Activated CD4-positive, alpha-beta memory T cell treated with anti-CD3 and anti-CD28 coated beads, Interleukin-2, amount 10 ng/mL, durations not matched to agents 7 days and 5 days (primary cell): ENCODE measurements at regions of chr5 and their contacts with region 1.

Region 1: DNA sequence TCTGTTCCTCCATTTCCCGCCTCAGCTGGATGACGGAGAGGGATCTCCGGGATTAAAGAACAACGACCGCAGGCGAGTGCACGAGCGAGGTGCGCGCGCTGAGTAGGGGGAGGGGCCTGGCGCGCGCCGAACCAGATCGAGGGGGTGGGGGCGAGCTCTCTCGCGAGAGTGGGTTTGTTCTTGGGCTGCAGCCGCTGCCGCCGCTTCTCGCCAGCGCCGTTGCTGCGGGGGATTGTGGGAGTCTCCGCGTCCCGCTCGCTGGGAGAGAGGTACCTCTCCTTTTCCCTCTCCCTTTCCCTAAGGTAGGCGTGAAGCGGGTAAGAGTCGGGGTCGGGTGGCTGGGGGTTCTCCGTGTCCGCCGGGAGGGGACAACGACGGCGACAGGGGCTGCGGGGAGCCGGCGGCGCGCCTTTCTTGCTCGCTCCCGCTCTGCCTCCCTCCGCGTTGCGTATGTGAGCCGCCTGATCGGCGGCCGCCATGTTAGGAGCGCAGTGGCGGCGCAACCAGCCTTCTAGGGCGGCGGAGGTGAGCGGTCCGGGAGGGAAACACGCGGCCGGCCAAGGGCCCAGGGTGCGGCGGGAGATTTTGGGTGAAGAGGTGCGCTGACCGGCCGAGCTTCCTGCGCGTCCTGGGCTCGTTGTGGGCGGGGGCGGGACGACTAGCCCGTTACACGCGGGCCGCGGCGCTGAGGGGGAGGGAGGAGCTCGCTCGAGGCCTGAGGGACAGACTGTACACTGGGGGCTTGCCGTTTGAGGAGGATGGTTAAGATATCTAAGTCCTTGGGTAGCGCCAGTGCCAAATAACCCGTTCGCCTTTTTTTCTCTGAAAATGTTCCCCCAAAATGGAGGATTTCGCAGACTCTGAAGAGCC is at the start of gene MATR3:
- DNase-seq: peak; percentile 95
- H3K4me3 Mint-ChIP-seq: peak within 1 kb of the TSS; percentile 95
- H3K27ac Mint-ChIP-seq: peak within 1 kb of the TSS; percentile 98
- H3K4me1 Mint-ChIP-seq: peaks cover 44% of the 10 kb centered on the region
- H3K27me3 Mint-ChIP-seq: no peaks in the 10 kb centered on the region
- total RNA-seq, gene MATR3: 168 to 193 TPM

Region 2: DNA sequence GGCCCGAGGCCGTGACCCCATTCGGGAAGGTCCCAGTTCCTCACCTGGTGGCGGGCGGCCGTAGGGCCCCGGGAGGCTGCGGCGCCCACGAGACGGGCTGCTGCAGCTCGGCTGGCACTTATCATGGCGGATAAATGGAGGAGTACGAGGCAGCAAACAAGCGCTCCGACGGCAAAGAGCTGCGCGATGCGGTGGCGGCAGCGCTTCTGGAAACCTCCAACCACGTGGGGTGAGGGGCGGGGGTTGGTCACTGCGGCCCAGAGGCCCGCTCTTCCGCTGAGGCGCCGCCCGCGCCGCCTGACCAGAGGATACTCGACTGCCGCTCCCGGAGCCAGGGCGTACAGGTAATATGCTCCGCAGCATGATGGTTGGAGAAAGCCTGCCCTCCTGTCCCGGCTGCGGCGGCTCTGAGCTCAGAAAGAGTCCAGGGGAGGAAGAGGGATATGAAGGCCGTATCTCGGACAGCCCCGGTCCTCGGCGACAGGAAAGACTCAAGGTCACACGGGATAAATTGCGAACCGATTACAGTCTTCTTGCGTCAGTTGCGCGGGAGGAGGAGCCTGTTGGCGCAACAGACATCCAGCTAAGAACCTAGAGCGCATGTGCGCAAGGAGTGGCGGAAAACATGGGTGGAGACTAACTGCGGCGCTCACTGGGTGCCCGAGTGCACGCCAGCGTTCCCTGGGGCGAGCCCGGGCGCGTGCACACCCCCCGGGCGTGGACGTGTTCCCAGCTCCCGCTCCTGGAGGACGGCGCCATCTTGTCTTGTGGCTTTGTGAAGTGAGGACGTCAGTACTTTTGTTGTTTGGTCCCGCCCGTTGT is 718.3 kb before region 1 on chr5 and contains the start of gene HSPA9:
- CTCF ChIA-PET with region 1: interaction called, 3 read pairs
- POLR2A ChIA-PET with region 1: interaction called, 19 read pairs
- DNase-seq: peak; percentile 98
- H3K4me3 Mint-ChIP-seq: peak within 1 kb of the TSS; percentile 92
- H3K27ac Mint-ChIP-seq: peak within 1 kb of the TSS; percentile 97
- H3K4me1 Mint-ChIP-seq: peaks cover 48% of the 10 kb centered on the region
- H3K27me3 Mint-ChIP-seq: no peaks in the 10 kb centered on the region
- total RNA-seq, gene HSPA9: 205 to 217 TPM

Region 3: DNA sequence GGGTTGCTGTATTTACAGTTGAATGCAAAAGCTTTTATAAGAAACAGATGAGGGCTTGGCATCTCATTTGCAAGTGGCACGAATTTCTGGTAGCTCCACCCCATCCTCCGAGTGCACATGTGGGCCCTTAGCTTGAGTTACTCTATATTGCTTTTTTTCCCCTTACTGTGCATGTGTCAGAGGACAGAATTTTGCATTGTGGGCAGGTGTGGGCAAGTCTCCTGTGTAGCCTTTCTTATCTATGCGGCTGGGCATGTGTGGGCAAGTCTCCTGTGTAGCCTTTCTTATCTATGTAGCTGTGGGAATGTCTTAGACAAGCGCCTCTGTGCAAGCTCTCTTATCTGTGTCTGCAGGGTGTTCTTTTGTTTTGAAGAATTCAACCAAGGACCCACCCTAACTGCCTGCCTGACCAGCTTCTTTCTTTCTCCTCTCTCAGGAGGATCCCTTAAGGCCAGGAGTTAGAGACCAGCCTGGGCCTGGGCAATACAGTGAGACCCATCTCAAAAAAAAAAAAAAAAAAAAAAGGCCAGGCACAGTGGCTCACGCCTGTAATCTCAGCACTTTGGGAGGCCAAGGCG is 61.5 kb before region 1 on chr5:
- CTCF ChIA-PET with region 1: no interaction called
- POLR2A ChIA-PET with region 1: no interaction called
- DNase-seq: no peak
- H3K4me3 Mint-ChIP-seq: no peak overlapping the region
- H3K27ac Mint-ChIP-seq: no peak overlapping the region
- H3K4me1 Mint-ChIP-seq: peaks cover 3% of the 10 kb centered on the region
- H3K27me3 Mint-ChIP-seq: no peaks in the 10 kb centered on the region

Region 4: DNA sequence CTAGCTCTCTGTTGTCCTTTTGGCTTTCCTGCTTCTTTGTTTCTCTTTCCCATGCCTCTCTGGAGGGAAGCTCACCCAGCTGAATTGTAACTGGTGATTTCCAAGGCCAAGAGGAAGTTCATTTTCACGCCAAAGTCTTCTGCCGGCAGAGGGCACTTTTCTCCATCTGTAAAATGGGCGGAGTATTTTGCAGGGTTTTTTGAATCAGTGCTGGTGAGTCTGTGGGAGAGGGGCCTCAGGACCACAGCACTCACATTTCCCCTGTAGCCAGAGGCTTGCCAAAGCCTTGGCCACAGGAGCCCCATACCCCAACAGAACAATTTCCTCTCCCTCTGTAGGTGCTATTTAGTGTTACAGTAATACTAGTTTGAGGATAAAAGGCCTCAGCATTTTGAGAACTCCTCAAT is 42.5 kb before region 1 on chr5:
- CTCF ChIA-PET with region 1: interaction called, 9 read pairs
- POLR2A ChIA-PET with region 1: interaction called, 11 read pairs
- DNase-seq: peak; percentile 60
- H3K4me3 Mint-ChIP-seq: no peak overlapping the region
- H3K27ac Mint-ChIP-seq: peak overlapping the region; percentile 11
- H3K4me1 Mint-ChIP-seq: peaks cover 21% of the 10 kb centered on the region
- H3K27me3 Mint-ChIP-seq: no peaks in the 10 kb centered on the region

Region 5: GRCh38 chr5:139273572-139274289 is 20.0 kb before region 1 on chr5:
- CTCF ChIA-PET with region 1: interaction called, 7 read pairs
- POLR2A ChIA-PET with region 1: interaction called, 175 read pairs
- DNase-seq: peak; percentile 91
- H3K4me3 Mint-ChIP-seq: peak overlapping the region; percentile 85
- H3K27ac Mint-ChIP-seq: peak overlapping the region; percentile 81
- H3K4me1 Mint-ChIP-seq: peaks cover 60% of the 10 kb centered on the region
- H3K27me3 Mint-ChIP-seq: peaks cover 4% of the 10 kb centered on the region

Region 6: DNA sequence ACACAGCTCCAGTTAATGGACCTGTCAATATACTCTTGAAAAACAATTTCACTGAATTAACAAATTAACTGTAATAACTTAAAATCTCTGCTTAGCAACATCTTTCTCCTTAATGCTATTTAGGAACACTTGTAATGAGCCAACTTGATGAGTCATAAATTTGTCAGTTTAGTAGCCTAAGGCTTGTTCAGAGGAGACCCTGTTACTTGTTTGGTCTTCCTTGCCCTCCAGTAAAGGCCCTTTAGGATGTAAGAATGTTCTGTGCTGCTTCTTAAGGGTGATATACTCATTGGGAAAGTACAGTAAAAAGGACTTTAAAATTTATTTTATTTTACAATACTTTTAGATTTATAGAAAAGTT is 11.6 kb before region 1 on chr5:
- CTCF ChIA-PET with region 1: no interaction called
- POLR2A ChIA-PET with region 1: interaction called, 175 read pairs
- DNase-seq: no peak
- H3K4me3 Mint-ChIP-seq: no peak overlapping the region
- H3K27ac Mint-ChIP-seq: no peak overlapping the region
- H3K4me1 Mint-ChIP-seq: peaks cover 39% of the 10 kb centered on the region
- H3K27me3 Mint-ChIP-seq: no peaks in the 10 kb centered on the region

Region 7: DNA sequence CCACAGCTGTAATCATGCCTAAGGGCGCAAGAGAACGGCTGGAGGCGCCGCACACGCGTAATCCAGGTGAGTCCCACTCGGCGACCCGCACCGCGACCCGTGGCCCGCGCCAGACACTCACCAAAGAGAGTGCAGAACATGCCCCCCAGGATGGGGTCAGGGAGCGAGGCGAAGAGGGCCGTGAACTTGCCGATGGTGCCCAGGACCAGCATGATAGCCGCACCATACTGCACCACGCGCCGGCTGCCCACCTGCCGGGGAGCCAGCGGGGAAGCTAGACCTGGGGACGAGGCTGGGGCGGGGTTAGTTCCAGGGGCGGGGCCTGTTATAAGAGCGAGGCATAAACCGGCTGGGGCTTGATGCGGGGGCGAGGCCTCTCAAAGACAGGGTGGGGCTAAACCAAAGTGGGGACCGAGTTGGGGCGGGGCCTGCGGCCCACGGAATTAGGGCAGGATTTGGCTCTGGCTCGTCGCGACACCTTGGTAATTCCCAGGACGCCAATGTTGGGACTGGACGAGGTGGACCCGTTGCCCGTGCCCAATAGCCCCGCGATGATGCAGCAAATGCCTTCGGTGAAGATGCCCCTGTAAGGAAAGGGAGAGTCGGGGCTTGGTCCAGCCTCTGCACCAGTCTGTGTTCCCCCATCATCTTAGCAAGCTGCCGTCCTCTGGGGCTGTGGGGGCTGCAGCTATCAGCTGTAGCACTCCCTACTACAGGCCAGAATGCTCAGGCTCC is 84.5 kb after region 1 on chr5:
- CTCF ChIA-PET with region 1: no interaction called
- POLR2A ChIA-PET with region 1: no interaction called
- DNase-seq: no peak
- H3K4me3 Mint-ChIP-seq: no peak overlapping the region
- H3K27ac Mint-ChIP-seq: no peak overlapping the region
- H3K4me1 Mint-ChIP-seq: peaks cover 9% of the 10 kb centered on the region
- H3K27me3 Mint-ChIP-seq: no peaks in the 10 kb centered on the region

Region 8: DNA sequence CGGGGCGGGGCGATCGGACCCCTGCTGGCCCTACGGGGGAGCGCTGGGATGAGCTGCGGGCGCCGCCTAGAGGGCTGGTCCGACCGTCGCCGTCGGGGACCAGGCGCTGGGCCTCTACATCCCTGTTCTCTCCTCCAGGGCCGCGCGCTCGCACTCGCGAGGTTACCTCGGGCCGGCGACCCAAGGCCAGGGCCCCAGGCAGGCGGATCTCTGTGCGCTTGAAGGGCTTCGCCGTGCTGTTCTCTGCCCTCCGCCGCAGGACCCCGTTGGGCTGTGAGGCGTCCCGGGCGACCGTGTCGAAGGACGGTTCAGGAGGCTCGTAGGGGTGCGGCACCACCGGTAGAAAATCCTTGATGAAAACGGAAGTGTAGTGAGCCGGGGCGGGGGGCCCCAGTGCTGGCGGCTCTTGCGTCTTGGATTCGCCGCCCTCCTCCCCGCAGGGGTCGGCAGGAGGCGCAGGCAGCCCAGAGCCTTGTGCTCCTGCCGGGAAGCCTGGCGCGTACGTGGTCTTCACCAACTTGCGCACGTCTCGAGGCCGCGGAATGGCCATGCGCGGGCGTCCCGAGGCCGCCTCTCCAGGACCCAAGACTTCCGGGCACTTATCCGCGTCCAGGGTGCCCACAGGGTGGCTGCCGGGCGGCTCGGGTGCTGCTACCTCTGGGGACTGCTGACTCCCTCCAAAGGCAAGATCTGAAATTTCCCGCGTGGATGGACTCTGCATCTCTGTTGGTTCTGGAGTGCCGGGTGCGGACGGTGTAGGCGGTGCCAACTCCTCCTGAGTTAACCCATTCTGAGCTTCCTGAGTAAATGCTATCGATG is 99.1 kb after region 1 on chr5:
- CTCF ChIA-PET with region 1: interaction called, 4 read pairs
- POLR2A ChIA-PET with region 1: interaction called, 52 read pairs
- DNase-seq: peak; percentile 92
- H3K4me3 Mint-ChIP-seq: peak overlapping the region; percentile 99
- H3K27ac Mint-ChIP-seq: peak overlapping the region; percentile 90
- H3K4me1 Mint-ChIP-seq: peaks cover 65% of the 10 kb centered on the region
- H3K27me3 Mint-ChIP-seq: no peaks in the 10 kb centered on the region

Region 9: DNA sequence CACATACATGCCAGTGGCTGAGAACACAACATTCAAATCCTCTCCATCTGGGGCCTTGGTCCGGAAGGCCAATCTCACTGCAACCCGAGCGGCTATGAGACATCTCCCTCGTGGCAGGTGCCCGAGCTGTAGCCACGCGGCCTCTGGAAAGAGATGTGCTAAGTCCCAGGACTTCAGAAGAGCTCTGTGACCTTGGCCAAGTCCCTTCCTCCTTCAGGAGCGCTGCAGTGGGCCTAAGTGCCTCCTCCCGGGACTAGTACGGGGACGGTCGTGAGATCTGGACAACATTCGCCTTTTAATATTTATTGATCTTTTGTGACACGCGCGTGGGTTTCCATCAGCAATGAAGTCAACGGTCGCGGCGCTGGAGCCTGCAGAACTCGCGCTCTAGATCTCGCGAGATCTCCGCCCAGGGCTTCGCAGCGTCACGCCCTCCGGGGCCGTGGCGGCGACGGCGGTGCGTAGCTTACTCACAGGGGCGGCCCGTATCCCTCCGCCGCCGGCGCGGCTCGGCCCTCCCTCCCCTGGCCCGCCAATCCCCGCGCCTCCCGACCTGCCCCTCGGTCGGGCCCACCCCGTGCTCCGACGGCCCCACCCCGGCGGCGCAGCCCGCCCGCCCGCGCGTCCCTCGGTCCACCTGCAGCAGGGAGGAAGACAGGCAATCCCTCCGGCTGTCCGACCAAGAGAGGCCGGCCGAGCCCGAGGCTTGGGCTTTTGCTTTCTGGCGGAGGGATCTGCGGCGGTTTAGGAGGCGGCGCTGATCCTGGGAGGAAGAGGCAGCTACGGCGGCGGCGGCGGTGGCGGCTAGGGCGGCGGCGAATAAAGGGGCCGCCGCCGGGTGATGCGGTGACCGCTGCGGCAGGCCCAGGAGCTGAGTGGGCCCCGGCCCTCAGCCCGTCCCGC is 267.3 kb after region 1 on chr5 and contains the start of gene UBE2D2:
- CTCF ChIA-PET with region 1: interaction called, 4 read pairs
- POLR2A ChIA-PET with region 1: interaction called, 14 read pairs
- DNase-seq: peak; percentile 98
- H3K4me3 Mint-ChIP-seq: peak within 1 kb of the TSS; percentile 95
- H3K27ac Mint-ChIP-seq: peak within 1 kb of the TSS; percentile 95
- H3K4me1 Mint-ChIP-seq: peaks cover 36% of the 10 kb centered on the region
- H3K27me3 Mint-ChIP-seq: no peaks in the 10 kb centered on the region
- total RNA-seq, gene UBE2D2: 241 to 244 TPM